ENCODE measurements at regions of chr20 and their contacts with region 1.

Region 1: GRCh38 chr20:34111702-34112599 is at the start of gene EIF2S2:
- DNase-seq: peak; percentile 97
- ATAC-seq: peak; percentile 88
- H3K4me3 Mint-ChIP-seq: peak within 1 kb of the TSS; percentile 86
- H3K27ac Mint-ChIP-seq: peak within 1 kb of the TSS; percentile 97
- H3K4me1 Mint-ChIP-seq: peaks cover 38% of the 10 kb centered on the region
- H3K27me3 Mint-ChIP-seq: no peaks in the 10 kb centered on the region
- total RNA-seq, gene EIF2S2: 179 to 187 TPM

Region 2: DNA sequence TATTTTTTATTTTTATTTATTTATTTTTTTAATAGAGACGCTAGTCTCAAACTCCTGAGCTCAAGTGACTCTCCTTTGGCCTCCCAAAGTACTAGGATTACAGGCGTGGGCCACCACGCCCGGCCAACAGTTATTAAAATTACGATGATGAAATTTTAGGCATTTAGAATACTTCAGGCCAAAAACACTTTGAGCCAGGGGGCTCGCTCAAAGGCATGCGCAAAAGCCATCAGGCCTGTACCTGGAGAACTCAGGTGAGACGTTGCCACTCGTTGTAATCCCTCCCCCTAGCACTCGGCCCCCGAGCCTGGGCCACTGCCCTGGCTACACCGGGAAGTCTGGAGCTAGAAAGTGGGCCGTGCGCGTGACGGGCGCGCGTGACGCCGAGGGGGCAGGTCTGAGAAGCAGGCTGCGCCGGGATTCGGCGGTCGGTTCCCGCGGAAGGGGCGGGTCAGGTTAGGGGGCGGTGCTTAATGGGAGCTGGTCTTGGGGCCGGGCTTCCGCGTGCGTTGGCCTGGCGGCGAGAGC is 622.4 kb before region 1 on chr20:
- CTCF ChIA-PET with region 1: no interaction called
- POLR2A ChIA-PET with region 1: no interaction called
- intact Hi-C with region 1: loop called in 1 of 2 experiments (anchors 1 kb)
- DNase-seq: peak; percentile 99
- ATAC-seq: peak; percentile 98
- H3K4me3 Mint-ChIP-seq: peak overlapping the region; percentile 85
- H3K27ac Mint-ChIP-seq: peak overlapping the region; percentile 78
- H3K4me1 Mint-ChIP-seq: peaks cover 6% of the 10 kb centered on the region
- H3K27me3 Mint-ChIP-seq: no peaks in the 10 kb centered on the region

Region 3: DNA sequence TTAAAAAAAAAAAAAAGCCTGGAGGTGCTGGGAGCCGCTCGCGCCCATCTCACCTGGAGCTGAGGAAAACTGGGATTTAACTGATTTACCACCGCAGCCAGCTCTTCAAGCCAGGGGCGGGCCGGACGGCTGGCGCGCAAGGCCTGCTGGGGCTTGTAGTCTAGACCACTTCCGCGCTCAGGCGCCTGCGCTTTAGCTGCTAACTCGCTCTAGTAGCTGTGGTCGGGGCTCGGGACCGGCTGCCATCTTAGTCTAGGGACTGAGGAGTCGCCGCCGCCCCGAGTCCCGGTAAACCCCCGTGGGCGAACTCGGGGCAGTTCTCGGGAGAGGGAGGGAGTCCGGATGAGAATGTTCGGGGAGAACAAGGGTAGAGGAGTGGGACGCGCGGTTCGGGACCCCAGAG is 251.1 kb after region 1 on chr20 and contains the start of gene ITCH:
- CTCF ChIA-PET with region 1: no interaction called
- POLR2A ChIA-PET with region 1: interaction called, 5 read pairs
- intact Hi-C with region 1: loop called in 1 of 2 experiments (anchors 1 kb)
- DNase-seq: peak; percentile 97
- ATAC-seq: peak; percentile 99
- H3K4me3 Mint-ChIP-seq: peak within 1 kb of the TSS; percentile 91
- H3K27ac Mint-ChIP-seq: peak within 1 kb of the TSS; percentile 98
- H3K4me1 Mint-ChIP-seq: peaks cover 38% of the 10 kb centered on the region
- H3K27me3 Mint-ChIP-seq: no peaks in the 10 kb centered on the region
- total RNA-seq, gene ITCH: 41.4 to 43.5 TPM